ENCODE measurements at regions of chr12 and their contacts with region 1.

Region 1: DNA sequence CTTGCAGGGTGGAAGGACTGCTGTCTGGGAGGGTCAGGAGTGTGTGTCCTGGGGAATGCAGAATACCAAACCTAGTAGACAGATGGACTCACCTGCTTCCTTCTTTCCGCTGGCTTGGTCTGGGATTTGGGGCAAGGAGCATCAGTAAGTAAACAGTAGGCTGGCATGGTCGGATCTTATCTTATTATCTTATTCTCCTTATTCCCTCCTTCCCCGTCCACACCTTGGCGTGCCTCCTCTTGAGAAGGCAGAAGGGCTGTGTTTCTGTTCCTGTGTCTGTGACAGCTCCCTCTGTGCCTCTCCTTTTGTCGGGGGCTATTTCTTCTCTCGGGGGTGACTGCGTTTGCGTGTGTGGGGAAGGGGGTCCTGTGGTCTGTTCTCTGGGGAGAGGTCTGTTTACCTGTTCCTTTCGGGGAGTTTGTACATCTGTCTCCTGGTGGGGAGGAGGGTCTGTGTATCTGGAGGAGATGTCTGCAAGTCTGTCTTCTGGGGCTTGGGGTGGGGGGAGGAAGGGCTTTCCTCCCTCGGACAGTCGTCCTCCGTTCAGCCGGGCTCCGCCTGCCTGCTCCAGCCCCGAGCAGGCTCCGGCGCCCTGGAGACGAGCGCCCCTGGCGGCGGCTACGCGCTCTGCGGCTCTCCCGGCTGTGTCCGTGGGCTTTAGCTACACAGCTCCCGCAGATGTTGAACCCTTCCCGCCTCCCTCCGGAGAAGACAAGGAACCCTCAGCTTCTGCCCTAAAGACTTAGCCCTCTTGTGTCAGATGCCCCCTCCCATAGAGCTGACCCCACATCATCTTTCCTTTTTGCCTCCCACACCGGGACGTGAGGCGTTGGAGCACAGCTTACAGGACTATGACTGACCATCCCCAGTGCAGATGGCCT is 4.3 kb downstream of the KRT86 start:
- DNase-seq: peak; percentile 93
- ATAC-seq: peak; percentile 43
- H3K4me3 ChIP-seq: peak overlapping the region; percentile 64
- H3K27ac ChIP-seq: peak overlapping the region; percentile 99
- H3K4me1 ChIP-seq: peaks cover 54% of the 10 kb centered on the region
- H3K27me3 ChIP-seq: no peaks in the 10 kb centered on the region
- CTCF ChIP-seq: peak; percentile 95

Region 2: GRCh38 chr12:51886021-51886322 is 392.8 kb before region 1 on chr12:
- CTCF ChIA-PET with region 1: no interaction called
- POLR2A ChIA-PET with region 1: no interaction called
- intact Hi-C with region 1: no loop called
- DNase-seq: peak; percentile 83
- ATAC-seq: peak; percentile 95
- H3K4me3 ChIP-seq: no peak overlapping the region
- H3K27ac ChIP-seq: peak overlapping the region; percentile 34
- H3K4me1 ChIP-seq: peaks cover 7% of the 10 kb centered on the region; the same call in 1 of the 2 replicates
- H3K27me3 ChIP-seq: no peaks in the 10 kb centered on the region
- CTCF ChIP-seq: no peak

Region 3: DNA sequence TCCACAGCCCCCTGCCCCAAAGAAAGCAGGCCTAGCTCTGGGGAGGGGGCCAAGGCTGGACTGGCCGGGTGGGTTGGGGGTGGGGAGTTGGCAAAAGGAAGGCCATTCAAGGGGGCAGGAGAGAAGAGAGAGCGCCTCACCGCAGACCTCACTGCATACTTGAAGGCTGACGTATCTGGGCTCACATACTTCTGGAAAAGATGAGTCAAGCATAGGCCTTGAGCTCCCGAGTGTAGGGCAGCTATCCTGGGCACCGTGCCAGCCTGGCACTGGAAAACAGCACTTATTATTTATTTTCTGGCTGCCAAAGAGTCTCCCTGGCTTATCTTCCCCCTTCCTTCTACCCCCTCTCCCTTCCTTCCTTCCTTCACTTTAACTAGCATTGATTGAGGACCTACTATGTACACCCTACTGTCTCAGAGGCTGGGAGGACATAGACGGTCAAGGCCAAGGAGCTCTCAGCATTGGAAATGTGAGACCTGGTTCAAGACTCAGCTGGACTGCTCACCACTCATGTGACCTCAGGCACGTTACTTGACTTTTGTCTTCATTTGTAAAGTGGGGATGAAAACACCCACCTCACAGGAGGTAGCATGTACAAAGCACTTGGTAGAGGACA is 86.5 kb before region 1 on chr12:
- CTCF ChIA-PET with region 1: interaction called, 3 read pairs
- POLR2A ChIA-PET with region 1: interaction called, 3 read pairs
- intact Hi-C with region 1: loop called (anchors 1 kb)
- DNase-seq: peak; percentile 99
- ATAC-seq: peak; percentile 86
- H3K4me3 ChIP-seq: peak overlapping the region; percentile 78
- H3K27ac ChIP-seq: peak overlapping the region; percentile 69
- H3K4me1 ChIP-seq: peaks cover 80% of the 10 kb centered on the region
- H3K27me3 ChIP-seq: no peaks in the 10 kb centered on the region
- CTCF ChIP-seq: no peak

Region 4: DNA sequence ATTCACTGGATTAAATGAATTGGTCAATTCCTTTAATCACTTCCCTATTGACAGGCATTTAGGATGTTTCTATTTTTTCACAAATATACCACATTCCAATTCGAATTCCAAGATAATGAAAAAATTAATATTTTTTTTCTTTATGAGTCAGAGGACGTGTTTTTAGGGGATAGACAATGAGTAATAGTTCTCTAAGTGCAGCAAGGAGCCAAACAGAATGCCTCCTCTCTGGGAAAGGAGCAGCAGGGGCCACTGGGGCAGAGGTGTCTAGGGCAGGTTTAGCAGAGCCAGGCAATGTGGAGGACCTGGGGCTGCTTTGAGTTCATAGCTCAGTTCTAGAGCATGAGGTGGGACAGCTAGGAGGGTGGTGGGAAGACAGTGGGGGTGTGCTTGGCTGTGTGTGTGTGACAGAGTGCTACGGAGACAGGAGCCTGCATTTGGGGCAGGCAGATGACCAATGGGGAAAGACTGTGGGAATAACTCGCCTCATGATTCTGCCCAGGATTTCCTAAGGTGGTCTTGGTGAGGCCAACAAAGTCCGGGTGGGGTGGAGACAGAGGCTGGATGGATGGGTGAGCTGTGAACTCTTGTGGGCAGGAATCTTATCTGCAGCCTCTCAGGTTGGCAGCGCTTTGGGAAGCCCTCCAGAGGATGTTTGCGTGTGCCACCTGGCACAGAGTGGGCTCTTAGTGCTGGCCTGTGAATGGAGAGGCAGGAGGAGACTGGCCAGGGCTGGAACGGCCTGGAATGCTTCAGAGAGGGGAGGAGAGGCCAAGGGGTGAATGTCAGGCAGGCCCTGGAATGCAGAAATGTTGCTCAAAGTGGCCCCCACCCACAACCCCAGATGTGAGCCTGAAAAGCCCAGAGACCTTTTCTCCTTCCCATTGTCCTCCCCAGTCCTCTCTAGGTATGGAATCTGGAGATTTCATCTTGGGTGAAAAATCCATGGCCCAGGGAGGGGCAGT is 48.2 kb before region 1 on chr12:
- CTCF ChIA-PET with region 1: interaction called, 8 read pairs
- POLR2A ChIA-PET with region 1: no interaction called
- intact Hi-C with region 1: loop called (anchors 2 kb)
- DNase-seq: peak; percentile 95
- ATAC-seq: peak; percentile 70
- H3K4me3 ChIP-seq: no peak overlapping the region; the same call in 1 of the 2 replicates
- H3K27ac ChIP-seq: peak overlapping the region; percentile 91
- H3K4me1 ChIP-seq: peaks cover 61% of the 10 kb centered on the region
- H3K27me3 ChIP-seq: no peaks in the 10 kb centered on the region
- CTCF ChIP-seq: no peak

Region 5: DNA sequence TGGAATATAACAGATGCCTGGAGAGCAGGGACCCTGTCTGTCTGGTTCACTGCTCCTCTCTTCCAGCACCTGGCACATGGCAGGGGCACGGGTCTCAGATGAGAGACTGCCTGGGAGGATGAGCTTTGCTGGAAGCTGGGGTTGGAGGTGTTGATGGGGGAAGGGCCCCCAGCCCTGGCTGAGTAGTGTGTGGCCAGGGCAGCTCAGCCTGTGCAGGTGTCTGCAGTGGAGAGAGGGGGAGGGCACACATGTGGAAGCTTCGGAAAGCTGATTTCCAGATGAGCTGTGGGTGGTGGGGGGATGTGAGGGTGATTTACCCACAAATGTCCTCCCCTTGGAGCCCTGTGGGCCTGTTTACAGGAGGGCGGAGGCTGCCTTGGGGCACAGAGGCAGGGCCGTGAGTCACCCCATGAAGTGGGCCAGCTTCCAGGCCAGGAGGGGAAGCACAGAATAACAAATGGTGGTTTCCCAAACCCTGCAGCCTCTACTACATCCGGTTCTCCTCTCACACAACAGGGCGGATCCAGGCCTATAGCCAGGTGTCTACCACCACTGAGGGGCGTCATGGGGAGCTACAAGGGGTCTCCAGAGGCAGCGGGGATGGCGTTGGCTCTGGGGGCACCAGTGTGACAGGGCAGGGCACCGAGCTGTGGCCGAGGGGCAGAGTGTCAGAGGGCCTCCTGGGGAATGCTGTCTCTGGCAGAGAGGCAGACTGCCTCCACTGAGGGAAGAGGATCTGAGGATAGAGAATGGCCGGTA is 34.7 kb before region 1 on chr12:
- CTCF ChIA-PET with region 1: interaction called, 7 read pairs
- POLR2A ChIA-PET with region 1: interaction called, 8 read pairs
- intact Hi-C with region 1: loop called (anchors 2 kb)
- DNase-seq: peak; percentile 97
- ATAC-seq: peak; percentile 56
- H3K4me3 ChIP-seq: peak overlapping the region; percentile 34; the same call in 1 of the 2 replicates
- H3K27ac ChIP-seq: peak overlapping the region; percentile 96
- H3K4me1 ChIP-seq: peaks cover 92% of the 10 kb centered on the region
- H3K27me3 ChIP-seq: no peaks in the 10 kb centered on the region
- CTCF ChIP-seq: no peak

Region 6: GRCh38 chr12:52258335-52258901 is 20.4 kb before region 1 on chr12:
- CTCF ChIA-PET with region 1: no interaction called
- POLR2A ChIA-PET with region 1: no interaction called
- intact Hi-C with region 1: no loop called
- DNase-seq: no peak
- ATAC-seq: no peak
- H3K4me3 ChIP-seq: no peak overlapping the region
- H3K27ac ChIP-seq: no peak overlapping the region
- H3K4me1 ChIP-seq: peaks cover 17% of the 10 kb centered on the region
- H3K27me3 ChIP-seq: no peaks in the 10 kb centered on the region
- CTCF ChIP-seq: no peak

Region 7: GRCh38 chr12:52310622-52311284 is 32.0 kb after region 1 on chr12:
- CTCF ChIA-PET with region 1: no interaction called
- POLR2A ChIA-PET with region 1: interaction called, 12 read pairs
- intact Hi-C with region 1: no loop called
- DNase-seq: no peak
- ATAC-seq: no peak
- H3K4me3 ChIP-seq: no peak overlapping the region
- H3K27ac ChIP-seq: no peak overlapping the region
- H3K4me1 ChIP-seq: peaks cover 11% of the 10 kb centered on the region
- H3K27me3 ChIP-seq: no peaks in the 10 kb centered on the region
- CTCF ChIP-seq: no peak

Region 8: GRCh38 chr12:52327052-52327829 is 48.5 kb after region 1 on chr12:
- CTCF ChIA-PET with region 1: interaction called, 4 read pairs
- POLR2A ChIA-PET with region 1: interaction called, 12 read pairs
- intact Hi-C with region 1: loop called (anchors 2 kb)
- DNase-seq: peak; percentile 98
- ATAC-seq: peak; percentile 98
- H3K4me3 ChIP-seq: no peak overlapping the region
- H3K27ac ChIP-seq: peak overlapping the region; percentile 76
- H3K4me1 ChIP-seq: peaks cover 15% of the 10 kb centered on the region
- H3K27me3 ChIP-seq: no peaks in the 10 kb centered on the region
- CTCF ChIP-seq: peak; percentile 99

Region 9: DNA sequence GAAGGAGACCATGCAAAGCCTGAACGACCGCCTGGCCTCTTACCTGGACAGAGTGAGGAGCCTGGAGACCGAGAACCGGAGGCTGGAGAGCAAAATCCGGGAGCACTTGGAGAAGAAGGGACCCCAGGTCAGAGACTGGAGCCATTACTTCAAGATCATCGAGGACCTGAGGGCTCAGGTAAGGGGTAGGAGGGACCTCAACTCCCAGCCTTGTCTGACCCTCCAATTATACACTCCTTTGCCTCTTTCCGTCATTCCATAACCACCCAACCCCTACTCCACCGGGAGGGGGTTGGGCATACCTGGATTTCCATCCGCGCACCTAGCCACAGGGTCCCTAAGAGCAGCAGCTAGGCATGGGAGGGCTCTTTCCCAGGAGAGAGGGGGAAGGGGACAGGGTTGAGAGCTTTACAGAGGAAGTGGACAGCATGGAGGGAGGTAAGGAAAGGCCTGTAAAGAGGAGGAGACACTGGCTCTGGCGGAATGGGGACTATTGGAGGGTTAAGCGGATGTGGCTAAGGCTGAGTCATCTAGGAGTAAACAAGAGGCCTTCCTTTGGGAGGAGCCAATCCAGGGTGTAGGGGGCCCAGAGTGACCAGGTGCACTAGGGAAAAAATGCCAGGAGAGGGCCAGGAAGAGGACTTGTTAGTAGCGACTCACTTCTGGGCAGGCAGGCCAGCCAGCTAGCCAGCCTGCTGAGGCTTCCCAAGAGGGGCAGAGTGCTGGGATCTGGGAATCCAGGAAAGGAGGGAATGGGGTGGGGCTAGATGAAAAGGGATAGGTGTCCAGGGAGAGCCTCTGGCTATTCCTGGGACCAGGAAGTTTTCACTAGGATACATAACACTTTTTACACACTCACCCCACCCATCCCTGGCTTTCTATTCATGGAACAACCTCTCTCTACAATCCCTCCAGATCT is 670.9 kb after region 1 on chr12:
- CTCF ChIA-PET with region 1: no interaction called
- POLR2A ChIA-PET with region 1: interaction called, 12 read pairs
- intact Hi-C with region 1: no loop called
- DNase-seq: peak; percentile 96
- ATAC-seq: peak; percentile 78
- H3K4me3 ChIP-seq: peak overlapping the region; percentile 94
- H3K27ac ChIP-seq: peak overlapping the region; percentile 84
- H3K4me1 ChIP-seq: peaks cover 57% of the 10 kb centered on the region
- H3K27me3 ChIP-seq: no peaks in the 10 kb centered on the region
- CTCF ChIP-seq: no peak

Measured in PC-3 (cell line).